Calu3 (cell line): ENCODE measurements at regions of chr17 and their contacts with region 1.

Region 1: DNA sequence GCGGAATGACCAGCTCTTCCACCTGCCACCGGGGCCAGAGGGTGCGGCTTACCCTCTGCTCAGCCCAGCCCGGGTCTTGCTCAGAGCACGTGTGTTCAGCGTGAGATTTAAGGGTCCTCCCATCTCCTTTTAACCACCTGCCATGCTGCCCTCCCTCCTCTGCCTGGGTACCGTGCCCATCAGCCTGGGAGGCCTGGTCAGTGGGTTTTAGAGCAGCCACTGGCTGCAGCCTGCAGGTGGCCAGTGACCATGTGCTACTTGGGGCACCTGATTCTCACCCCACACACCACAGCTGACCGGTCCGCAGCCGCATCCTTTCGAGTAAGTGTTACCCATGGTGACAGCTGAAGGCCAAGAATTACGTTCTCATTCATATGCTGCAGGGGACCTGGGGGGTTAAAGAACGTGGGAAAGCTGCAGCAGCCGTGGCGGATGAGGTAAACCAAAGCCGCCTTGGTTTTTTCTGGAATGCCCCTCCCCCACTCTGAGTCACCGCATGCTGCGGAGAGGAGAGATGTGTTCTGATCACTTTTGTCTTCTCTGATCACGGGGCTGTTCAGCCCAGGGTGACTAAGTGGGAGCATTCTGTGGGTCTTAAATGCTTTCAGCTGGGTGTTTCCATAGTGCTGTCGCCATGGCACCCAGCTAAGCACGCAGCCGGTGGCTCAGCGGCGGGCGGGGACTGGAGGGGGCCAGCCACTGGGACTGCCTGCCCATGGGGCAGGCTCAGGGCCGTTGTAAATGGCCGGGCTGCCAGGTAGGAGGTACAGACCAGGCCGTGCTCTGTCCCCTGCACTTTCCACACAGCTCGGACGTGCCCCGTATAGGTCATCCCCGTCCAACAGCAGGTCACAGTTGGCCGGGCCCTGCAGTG is 59.8 kb downstream of the BAIAP2 start:
- DNase-seq: peak; percentile 81
- H3K4me3 Mint-ChIP-seq: peak overlapping the region; percentile 10
- H3K27ac Mint-ChIP-seq: peak overlapping the region; percentile 17
- H3K4me1 Mint-ChIP-seq: peaks cover 33% of the 10 kb centered on the region
- H3K27me3 Mint-ChIP-seq: no peaks in the 10 kb centered on the region
- CTCF ChIP-seq: no peak

Region 2: DNA sequence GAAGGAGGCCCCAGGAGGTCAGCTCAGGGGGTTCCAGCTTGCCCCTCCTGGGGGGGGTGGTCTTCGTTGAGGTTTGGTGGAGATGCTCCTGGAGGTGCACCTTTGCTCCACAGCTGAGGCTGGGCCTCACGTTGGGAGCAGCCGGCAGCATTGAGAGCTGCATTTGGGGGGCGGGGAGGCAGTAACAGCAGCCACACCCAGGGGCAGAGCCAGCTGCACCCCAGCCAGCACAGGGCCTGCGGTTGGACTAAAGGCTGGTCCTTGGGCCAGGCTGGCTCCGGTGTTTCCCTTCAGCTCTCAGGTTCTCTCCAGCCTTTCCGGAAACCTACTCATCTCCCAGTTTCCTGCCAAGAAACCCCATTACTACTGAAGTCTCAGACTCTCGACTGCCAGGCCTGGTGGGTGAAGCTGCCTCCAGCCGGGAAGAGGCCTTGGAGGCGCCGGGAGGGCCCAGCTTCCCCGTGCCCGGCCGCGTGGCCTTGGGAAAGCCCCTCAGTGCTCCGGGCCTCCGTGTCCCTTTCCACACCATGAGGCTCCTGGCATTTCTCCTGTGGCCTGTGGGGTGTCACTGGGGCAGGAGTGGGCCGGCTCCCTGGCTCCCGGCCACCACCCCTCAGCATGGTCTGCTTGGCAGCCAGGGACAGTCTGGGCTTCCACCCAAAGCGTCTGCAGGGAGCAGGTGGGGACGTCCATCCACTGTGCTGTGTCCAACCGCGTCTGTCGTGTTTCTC is 73.8 kb before region 1 on chr17:
- CTCF ChIA-PET with region 1: interaction called, 39 read pairs
- intact Hi-C with region 1: loop called (anchors 5 kb)
- DNase-seq: no peak
- H3K4me3 Mint-ChIP-seq: no peak overlapping the region
- H3K27ac Mint-ChIP-seq: no peak overlapping the region
- H3K4me1 Mint-ChIP-seq: peaks cover 8% of the 10 kb centered on the region
- H3K27me3 Mint-ChIP-seq: peaks cover 34% of the 10 kb centered on the region
- CTCF ChIP-seq: no peak

Region 3: DNA sequence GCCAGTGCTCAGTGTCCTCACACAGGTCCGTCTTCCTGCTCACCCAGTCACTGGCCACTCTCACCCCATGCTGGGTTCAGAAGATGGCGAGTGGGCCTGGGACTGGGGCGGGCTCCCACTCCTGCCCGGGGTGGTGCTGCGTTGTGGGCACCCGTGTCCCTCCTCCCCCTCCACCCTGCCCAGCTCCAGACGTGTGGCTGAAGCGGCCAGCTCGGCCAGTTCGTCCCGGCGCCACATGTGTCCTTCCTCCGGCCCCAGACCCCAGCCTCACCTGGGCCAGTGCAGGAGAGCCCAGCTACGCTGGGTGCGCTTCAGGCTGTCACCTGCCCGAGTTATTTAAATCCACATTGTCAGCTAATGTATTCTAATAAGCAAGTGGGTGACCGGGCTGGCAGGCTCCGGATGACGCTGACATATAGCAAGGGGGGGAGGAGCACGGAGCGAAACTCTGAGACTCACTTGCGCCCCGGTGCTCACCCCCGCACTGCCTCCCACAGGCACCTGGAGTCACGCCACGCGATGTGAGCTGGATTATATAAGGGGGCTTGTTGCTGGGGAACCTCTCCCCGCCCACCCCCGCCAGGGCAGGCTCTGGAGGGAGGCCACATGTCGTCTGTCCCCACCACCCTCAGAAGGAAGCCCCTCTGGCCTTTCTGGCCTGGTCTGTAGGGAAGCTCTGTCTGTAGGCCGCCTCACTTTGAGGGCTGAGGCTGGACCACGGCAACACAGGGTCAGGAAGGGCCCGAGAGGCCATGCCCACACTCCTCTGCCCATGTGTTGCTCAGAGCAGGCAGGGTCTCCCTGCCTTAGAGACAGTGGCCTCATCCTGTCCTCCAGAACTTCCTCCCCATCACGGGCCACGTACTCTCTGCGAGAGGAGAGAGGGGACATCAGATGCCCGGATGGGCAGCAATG is 66.9 kb before region 1 on chr17:
- CTCF ChIA-PET with region 1: interaction called, 39 read pairs
- intact Hi-C with region 1: loop called (anchors 5 kb)
- DNase-seq: no peak
- H3K4me3 Mint-ChIP-seq: no peak overlapping the region
- H3K27ac Mint-ChIP-seq: no peak overlapping the region
- H3K4me1 Mint-ChIP-seq: peaks cover 8% of the 10 kb centered on the region
- H3K27me3 Mint-ChIP-seq: peaks cover 21% of the 10 kb centered on the region
- CTCF ChIP-seq: no peak

Region 4: GRCh38 chr17:81040791-81041337 is 53.9 kb before region 1 on chr17:
- CTCF ChIA-PET with region 1: interaction called, 19 read pairs
- intact Hi-C with region 1: loop called (anchors 5 kb)
- DNase-seq: peak; percentile 53
- H3K4me3 Mint-ChIP-seq: peak overlapping the region; percentile 21
- H3K27ac Mint-ChIP-seq: no peak overlapping the region
- H3K4me1 Mint-ChIP-seq: peaks cover 76% of the 10 kb centered on the region
- H3K27me3 Mint-ChIP-seq: no peaks in the 10 kb centered on the region
- CTCF ChIP-seq: peak; percentile 23